K562 (cell line): ENCODE measurements at regions of chr12 and their contacts with region 1.

Region 1: DNA sequence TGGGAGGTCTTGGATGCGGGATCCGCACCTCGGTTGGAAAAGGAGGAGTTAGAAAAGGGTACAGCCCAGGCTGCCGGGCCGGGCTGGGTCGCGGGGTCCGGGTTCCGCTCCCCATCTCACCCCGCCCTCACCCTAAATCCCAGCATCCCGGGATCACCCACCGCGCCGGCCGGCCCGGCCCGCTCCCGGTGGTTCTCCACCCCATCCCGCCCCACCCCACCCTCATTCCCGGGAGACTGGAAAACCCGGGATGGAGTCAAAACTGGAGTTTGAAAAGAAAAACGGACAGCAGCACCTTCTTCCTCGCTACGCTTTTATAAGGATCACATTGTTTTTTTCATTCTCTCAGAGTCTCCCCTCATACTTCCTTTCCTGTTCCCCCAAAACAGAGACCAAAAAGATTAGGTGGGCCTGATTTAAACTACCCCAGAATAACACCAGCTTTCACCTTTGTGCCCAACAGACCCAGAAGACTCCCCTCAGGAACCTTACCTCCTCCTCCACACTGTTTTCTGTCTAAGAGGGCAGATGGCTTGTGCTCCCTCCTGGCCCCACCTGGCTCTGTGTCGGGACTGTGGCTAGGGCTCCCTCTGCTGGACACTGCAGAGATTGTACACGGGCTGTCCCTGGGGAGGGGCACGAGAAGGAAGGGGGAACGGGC is 2.8 kb downstream of the GLI1 start:
- DNase-seq: peak; percentile 90 to 95 (median 93)
- ATAC-seq: peak; percentile 83
- H3K4me3 ChIP-seq: peak overlapping the region; percentile 51
- H3K27ac ChIP-seq: peak overlapping the region; percentile 55
- H3K4me1 ChIP-seq: peaks cover 21 to 39% of the 10 kb centered on the region in 2 experiments; a peak in 4 of 5 replicates
- H3K27me3 ChIP-seq: peaks cover 4 to 19% of the 10 kb centered on the region in 2 experiments; a peak in 3 of 5 replicates
- CTCF ChIP-seq: peak; percentile 96 to 98 (median 97)
- EP300 ChIP-seq: no peak
- POLR2A ChIP-seq: no peak
- RAD21 ChIP-seq: peak; percentile 77 to 90

Region 2: GRCh38 chr12:57213058-57213715 is 249.2 kb before region 1 on chr12:
- CTCF ChIA-PET with region 1: interaction called, 14 read pairs
- POLR2A ChIA-PET with region 1: interaction called, 4 read pairs
- in situ Hi-C with region 1: no loop called
- intact Hi-C with region 1: no loop called
- DNase-seq: peak; percentile 84 to 94 (median 90)
- ATAC-seq: peak; percentile 81
- H3K4me3 ChIP-seq: no peak overlapping the region
- H3K27ac ChIP-seq: no peak overlapping the region
- H3K4me1 ChIP-seq: peaks cover 17 to 56% of the 10 kb centered on the region in 2 experiments; a peak in 4 of 5 replicates
- H3K27me3 ChIP-seq: peaks cover 24 to 71% of the 10 kb centered on the region in 2 experiments; a peak in 4 of 5 replicates
- CTCF ChIP-seq: peak; percentile 89 to 97 (median 92)
- EP300 ChIP-seq: no peak
- POLR2A ChIP-seq: no peak
- RAD21 ChIP-seq: peak; percentile 78 to 85

Region 3: GRCh38 chr12:57263096-57263495 is 199.3 kb before region 1 on chr12:
- CTCF ChIA-PET with region 1: interaction called, 10 read pairs
- POLR2A ChIA-PET with region 1: interaction called, 3 read pairs
- in situ Hi-C with region 1: no loop called
- intact Hi-C with region 1: no loop called
- DNase-seq: no peak
- ATAC-seq: no peak
- H3K4me3 ChIP-seq: no peak overlapping the region
- H3K27ac ChIP-seq: no peak overlapping the region
- H3K4me1 ChIP-seq: peaks cover 0 to 3% of the 10 kb centered on the region in 2 experiments; a peak in 2 of 5 replicates
- H3K27me3 ChIP-seq: no peaks in the 10 kb centered on the region
- CTCF ChIP-seq: no peak
- EP300 ChIP-seq: no peak
- POLR2A ChIP-seq: no peak
- RAD21 ChIP-seq: no peak

Region 4: DNA sequence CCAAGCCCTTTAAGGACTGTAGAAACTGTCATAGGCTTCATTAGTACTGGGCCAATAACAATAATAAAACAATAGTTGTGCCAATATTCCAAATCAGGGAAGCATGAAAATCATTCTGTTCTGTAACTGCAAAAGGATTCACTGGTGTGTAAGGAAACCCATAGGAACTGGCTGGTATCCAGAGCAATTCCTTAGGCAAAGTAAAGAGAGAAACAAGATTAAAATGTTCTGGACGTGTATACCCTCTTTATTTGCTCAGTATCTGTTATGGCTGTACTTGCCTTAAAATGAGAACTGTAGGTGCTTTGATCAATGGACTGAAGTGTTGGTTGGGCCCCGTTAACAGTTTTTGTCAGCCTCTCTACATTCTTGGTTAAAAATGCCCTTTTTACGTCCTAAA is 139.0 kb before region 1 on chr12:
- CTCF ChIA-PET with region 1: no interaction called
- POLR2A ChIA-PET with region 1: no interaction called
- in situ Hi-C with region 1: no loop called
- intact Hi-C with region 1: no loop called
- DNase-seq: no peak
- ATAC-seq: no peak
- H3K4me3 ChIP-seq: no peak overlapping the region
- H3K27ac ChIP-seq: no peak overlapping the region
- H3K4me1 ChIP-seq: peaks cover 6 to 9% of the 10 kb centered on the region in 2 experiments; a peak in 2 of 5 replicates
- H3K27me3 ChIP-seq: no peaks in the 10 kb centered on the region
- CTCF ChIP-seq: no peak
- EP300 ChIP-seq: no peak
- POLR2A ChIP-seq: no peak
- RAD21 ChIP-seq: no peak

Region 5: GRCh38 chr12:57487597-57488401 is 25.4 kb after region 1 on chr12 and contains the start of gene MARS1:
- CTCF ChIA-PET with region 1: no interaction called
- POLR2A ChIA-PET with region 1: interaction called, 3 read pairs
- in situ Hi-C with region 1: no loop called
- intact Hi-C with region 1: loop called (anchors 2 kb)
- DNase-seq: peak; percentile 80 to 98 (median 86)
- ATAC-seq: peak; percentile 96
- H3K4me3 ChIP-seq: peak within 1 kb of the TSS; percentile 83
- H3K27ac ChIP-seq: peak within 1 kb of the TSS; percentile 92
- H3K4me1 ChIP-seq: peaks cover 7 to 15% of the 10 kb centered on the region in 2 experiments
- H3K27me3 ChIP-seq: no peaks in the 10 kb centered on the region
- CTCF ChIP-seq: peak; percentile 58 to 70 (median 61)
- EP300 ChIP-seq: peak; percentile 53
- POLR2A ChIP-seq: peak; percentile 90
- RAD21 ChIP-seq: peak in 1 of 2 experiments; percentile 24; a peak in 2 of 4 replicates
- polyA plus RNA-seq, gene MARS1: 117 to 168 TPM

Region 6: DNA sequence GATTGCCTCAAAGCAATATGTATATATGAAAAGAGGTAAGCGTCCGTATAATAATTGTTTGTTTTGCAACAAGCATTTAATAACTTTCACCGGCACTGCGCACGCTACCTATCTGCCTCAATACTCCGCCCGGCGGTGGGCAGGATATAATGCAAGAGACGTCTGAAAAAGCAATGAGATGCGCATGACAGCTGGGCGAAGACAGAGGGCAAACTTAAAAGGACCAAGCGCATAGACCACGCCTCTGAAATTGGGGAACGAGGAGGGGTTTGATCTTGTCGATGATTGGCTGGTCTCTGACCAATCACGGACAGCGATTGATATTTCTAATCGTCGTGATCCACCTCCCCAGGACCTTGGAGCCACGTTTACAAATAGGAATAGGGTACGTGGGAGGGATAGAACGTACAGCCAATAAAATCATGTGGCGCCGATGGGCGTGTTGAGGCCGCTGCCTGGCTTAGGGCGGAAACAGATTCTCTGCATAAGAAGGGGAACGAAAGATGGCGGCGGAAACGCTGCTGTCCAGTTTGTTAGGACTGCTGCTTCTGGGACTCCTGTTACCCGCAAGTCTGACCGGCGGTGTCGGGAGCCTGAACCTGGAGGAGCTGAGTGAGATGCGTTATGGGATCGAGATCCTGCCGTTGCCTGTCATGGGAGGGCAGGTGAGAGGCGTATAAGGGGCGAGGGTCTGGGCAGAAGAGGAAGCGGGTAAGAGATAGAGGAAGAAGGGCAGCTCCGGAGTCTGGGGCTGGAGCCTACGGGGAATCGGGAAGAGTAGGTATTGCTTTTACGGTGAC is 231.5 kb after region 1 on chr12 and contains the start of gene OS9:
- CTCF ChIA-PET with region 1: no interaction called
- POLR2A ChIA-PET with region 1: no interaction called
- in situ Hi-C with region 1: no loop called
- intact Hi-C with region 1: loop called (anchors 5 kb)
- DNase-seq: peak; percentile 99 to 100 (median 99)
- ATAC-seq: peak; percentile 99
- H3K4me3 ChIP-seq: peak within 1 kb of the TSS; percentile 82
- H3K27ac ChIP-seq: peak within 1 kb of the TSS; percentile 80
- H3K4me1 ChIP-seq: peaks cover 4 to 10% of the 10 kb centered on the region in 2 experiments; a peak in 3 of 5 replicates
- H3K27me3 ChIP-seq: no peaks in the 10 kb centered on the region
- CTCF ChIP-seq: peak; percentile 92 to 95 (median 94)
- EP300 ChIP-seq: no peak
- POLR2A ChIP-seq: peak; percentile 95
- RAD21 ChIP-seq: peak; percentile 69 to 70
- polyA plus RNA-seq, gene OS9: 4.6 to 7.9 TPM

Region 7: GRCh38 chr12:57735952-57736740 is 273.8 kb after region 1 on chr12:
- CTCF ChIA-PET with region 1: no interaction called
- POLR2A ChIA-PET with region 1: no interaction called
- in situ Hi-C with region 1: no loop called
- intact Hi-C with region 1: loop called (anchors 2 kb)
- DNase-seq: peak; percentile 77 to 85 (median 82)
- ATAC-seq: peak; percentile 93
- H3K4me3 ChIP-seq: peak overlapping the region; percentile 38
- H3K27ac ChIP-seq: peak overlapping the region; percentile 11; the same call in 2 of the 3 replicates
- H3K4me1 ChIP-seq: peaks cover 9 to 31% of the 10 kb centered on the region in 2 experiments; a peak in 4 of 5 replicates
- H3K27me3 ChIP-seq: peaks cover 20 to 59% of the 10 kb centered on the region in 2 experiments
- CTCF ChIP-seq: peak; percentile 71 to 79 (median 79)
- EP300 ChIP-seq: no peak
- POLR2A ChIP-seq: no peak
- RAD21 ChIP-seq: peak; percentile 66 to 78

Region 8: DNA sequence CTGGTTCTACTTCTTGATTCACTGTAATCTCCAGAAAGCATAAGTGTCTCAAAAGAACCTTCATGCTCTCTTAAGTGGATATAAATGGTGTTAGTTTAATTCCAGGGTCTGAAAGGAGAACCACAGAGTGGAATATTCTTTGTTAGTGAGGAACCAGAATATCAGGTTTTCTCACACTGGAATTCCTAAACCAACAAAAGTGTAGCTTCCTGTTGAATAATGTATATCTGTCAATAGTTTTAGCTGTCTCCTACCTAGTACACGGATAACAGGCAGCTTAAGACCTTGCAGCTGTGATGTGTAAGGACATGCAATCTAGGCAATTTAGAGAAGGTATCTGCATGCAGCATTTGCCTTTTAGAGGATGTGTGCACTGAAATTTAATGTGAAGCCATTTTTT is 1433.9 kb after region 1 on chr12:
- CTCF ChIA-PET with region 1: no interaction called
- POLR2A ChIA-PET with region 1: no interaction called
- in situ Hi-C with region 1: no loop called
- intact Hi-C with region 1: no loop called
- DNase-seq: no peak
- ATAC-seq: no peak
- H3K4me3 ChIP-seq: no peak overlapping the region
- H3K27ac ChIP-seq: no peak overlapping the region
- H3K4me1 ChIP-seq: no peaks in the 10 kb centered on the region
- H3K27me3 ChIP-seq: no peaks in the 10 kb centered on the region
- CTCF ChIP-seq: no peak
- EP300 ChIP-seq: no peak
- POLR2A ChIP-seq: no peak
- RAD21 ChIP-seq: no peak